Tibial artery (tissue), 4 donors: ENCODE measurements at regions of chr16 and their contacts with region 1.

Region 1: DNA sequence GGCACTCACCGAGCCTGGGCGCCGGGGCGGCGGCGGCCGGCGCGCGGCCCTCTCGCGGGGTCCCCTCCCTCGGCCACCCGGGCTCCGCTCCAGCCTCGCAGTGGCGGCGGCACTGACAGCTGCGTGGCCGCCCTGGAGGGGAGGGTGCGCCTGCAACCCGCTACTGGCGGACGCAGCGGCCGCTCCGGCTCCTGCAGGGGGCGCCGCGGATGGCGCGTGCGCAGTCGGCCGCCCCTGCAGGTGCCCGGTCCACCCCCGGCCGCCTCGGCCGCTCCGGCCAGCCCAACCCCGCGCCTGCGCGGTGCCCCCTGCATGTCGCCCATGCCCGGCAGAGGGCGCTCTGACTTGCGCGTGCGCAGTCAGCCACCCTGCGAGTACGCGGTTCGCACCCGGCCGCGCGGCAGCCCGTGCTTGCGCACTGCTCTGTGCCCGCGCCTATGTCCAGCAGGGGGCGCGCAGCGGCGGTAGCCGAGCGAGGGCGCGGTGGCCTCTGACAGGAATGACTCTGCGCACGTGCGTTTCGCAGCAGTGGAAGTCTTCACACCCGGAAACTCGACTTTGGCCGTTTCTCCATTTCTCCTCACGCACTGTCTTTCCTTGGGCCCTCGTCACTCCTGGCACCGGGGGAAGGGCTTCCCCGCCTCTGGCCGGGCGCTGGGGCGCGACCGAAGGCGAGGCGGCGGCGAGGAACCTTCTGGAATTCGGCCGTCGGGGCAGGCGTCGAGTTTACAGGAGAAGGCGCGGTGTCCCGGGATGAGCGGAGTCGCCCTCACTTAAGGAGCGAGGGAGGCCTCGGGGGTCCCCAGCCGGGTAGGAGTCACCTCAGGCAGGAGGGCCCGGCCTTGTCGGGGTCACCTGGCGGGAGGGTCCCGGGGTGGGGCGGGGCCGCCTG is at the start of gene ABCA3:
- DNase-seq: peak; percentile 85 to 97
- H3K4me3 ChIP-seq: peak within 1 kb of the TSS; percentile 73 to 87
- H3K27ac ChIP-seq: peak within 1 kb of the TSS; percentile 62 to 66
- H3K4me1 ChIP-seq: peaks cover 0 to 30% (median 24%) of the 10 kb centered on the region in 4 donors
- H3K27me3 ChIP-seq: no peaks in the 10 kb centered on the region
- CTCF ChIP-seq: peak; percentile 100

Region 2: DNA sequence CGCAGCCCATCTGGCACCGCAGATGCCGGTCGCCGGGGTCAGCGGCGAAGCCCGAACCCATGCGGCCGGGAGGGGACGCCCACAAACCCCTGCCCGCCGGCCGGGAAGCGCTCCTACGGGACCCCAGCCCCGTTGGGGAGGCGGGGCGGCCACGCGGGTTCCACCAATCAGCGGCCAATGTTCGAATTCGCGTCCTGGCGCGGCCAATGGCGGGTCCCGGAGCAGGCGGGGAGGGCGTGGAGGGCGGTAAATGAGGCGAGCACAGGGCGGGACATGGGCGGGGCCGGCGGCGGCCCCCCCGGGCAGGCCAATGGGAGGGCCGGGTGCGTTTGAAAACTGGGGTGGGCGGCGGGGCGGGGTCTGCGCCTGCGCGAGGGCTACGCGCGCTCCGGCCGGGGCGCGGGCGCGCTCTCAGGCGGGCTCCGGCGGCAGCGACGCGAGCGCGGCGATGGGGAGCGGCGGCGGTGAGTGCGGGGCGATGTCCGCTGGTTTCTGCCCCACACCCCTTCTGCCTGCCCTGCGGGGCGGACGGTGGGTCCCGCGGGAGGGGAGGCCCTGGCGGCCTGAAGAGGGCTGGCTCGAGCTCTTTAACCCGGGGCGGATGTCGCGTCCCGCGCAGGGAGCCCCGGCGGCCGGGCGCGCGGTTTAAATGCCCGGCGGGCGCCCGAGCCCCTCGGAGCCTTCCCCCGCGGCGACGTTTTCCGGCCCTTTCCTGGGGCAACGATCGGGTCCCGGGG is 88.4 kb after region 1 on chr16 and contains the start of gene CCNF:
- intact Hi-C with region 1: loop called (anchors 2 kb)
- DNase-seq: peak; percentile 96 to 98
- H3K4me3 ChIP-seq: peak within 1 kb of the TSS; percentile 63 to 96
- H3K27ac ChIP-seq: peak within 1 kb of the TSS; percentile 73 to 75
- H3K4me1 ChIP-seq: peaks cover 0 to 16% (median 13%) of the 10 kb centered on the region in 4 donors
- H3K27me3 ChIP-seq: no peaks in the 10 kb centered on the region
- CTCF ChIP-seq: peak in 1 of 2 experiments; percentile 26

Region 3: GRCh38 chr16:2474877-2475412 is 134.1 kb after region 1 on chr16 and contains the start of gene TBC1D24:
- intact Hi-C with region 1: loop called (anchors 10 kb)
- DNase-seq: peak; percentile 82 to 93
- H3K4me3 ChIP-seq: peak within 1 kb of the TSS; percentile 74 to 78
- H3K27ac ChIP-seq: peak within 1 kb of the TSS; percentile 76 to 84
- H3K4me1 ChIP-seq: peaks cover 6 to 53% (median 38%) of the 10 kb centered on the region in 4 donors
- H3K27me3 ChIP-seq: peaks cover 6 to 37% of the 10 kb centered on the region in 2 donors
- CTCF ChIP-seq: no peak

Region 4: DNA sequence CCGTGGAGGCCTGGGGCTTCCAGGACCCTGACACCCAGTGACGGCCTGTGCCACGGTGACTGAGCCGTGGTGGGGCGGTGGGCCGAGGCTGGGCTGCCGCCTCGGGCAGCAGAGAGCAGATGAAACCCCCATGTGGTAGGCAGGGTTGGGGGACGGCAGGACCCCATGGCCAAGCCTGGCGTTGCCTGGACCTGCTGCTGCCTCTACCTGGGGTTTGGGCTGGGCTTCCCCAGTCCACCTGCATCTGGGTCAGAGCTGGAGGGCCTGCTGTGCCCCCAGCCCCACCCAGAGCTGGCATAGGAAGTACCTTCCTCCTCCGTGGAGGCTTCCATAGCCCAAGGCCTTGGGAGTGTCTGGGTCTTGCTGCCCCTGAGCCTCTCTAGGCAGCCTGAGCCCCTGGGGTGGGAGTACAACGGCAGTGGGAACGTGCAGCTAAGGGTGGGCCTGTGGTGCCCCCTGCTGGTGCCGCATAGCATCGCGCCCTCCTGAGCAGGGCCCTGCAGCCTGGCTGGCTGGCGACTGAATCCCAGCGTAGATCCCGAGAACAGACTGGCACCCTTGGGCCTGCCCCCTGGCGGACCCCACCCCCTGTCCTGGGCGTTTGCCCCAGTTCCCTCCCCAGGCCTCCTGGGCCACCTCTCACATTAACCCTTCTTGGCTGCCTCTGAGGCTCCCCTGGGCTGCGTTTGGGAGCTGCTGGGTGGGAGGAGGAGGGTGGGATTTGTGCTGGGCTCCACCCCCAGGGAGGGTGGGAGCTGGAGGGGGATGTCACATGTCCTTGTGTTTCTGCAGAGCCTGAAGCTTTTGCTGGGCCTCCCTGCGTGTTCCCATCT is 160.3 kb after region 1 on chr16:
- intact Hi-C with region 1: loop called (anchors 2 kb)
- DNase-seq: peak; percentile 79 to 87
- H3K4me3 ChIP-seq: peak overlapping the region in 1 of 2 donors; percentile 35
- H3K27ac ChIP-seq: no peak overlapping the region
- H3K4me1 ChIP-seq: peaks cover 0 to 59% (median 19%) of the 10 kb centered on the region in 4 donors
- H3K27me3 ChIP-seq: no peaks in the 10 kb centered on the region
- CTCF ChIP-seq: peak; percentile 98 to 99